ENCODE measurements at regions of chr2 and their contacts with region 1.

Region 1: DNA sequence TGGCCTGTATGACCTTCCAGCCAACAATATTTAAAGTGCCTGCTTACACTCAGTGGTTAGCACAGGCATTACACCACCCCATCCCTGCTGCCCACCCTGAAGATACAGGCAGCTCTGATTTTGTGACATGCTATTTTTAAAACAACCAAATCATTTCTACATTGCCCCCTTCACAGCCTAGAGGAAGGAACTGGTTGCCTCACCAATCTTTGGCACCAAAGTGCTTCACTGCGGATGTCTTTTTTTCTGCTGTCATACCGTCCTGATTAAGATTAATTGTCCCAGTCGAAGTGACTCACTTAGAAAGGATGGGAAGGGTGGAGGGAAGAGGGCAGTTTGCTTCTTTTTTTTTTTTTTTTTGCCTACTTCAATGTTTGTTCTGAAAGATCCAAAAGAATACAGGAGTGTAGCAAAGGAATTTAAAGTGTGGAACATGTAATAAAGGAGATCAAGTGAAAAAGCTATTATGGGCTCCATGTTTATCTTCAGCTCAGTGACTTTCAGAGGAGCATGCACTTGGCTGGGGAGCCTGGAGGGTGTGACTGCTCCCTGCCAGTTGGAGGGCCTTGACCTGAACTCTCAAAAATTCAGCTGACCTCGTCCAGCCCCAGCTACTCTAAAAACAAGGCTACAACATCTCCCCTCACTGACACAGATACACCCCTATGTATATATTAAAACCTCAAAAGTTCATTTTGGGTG is 501.1 kb upstream of the TNP1 start:
- DNase-seq: peak; percentile 65
- H3K4me3 ChIP-seq: no peak overlapping the region
- H3K27ac ChIP-seq: peak overlapping the region; percentile 41
- H3K27me3 ChIP-seq: no peaks in the 10 kb centered on the region
- CTCF ChIP-seq: no peak

Region 2: DNA sequence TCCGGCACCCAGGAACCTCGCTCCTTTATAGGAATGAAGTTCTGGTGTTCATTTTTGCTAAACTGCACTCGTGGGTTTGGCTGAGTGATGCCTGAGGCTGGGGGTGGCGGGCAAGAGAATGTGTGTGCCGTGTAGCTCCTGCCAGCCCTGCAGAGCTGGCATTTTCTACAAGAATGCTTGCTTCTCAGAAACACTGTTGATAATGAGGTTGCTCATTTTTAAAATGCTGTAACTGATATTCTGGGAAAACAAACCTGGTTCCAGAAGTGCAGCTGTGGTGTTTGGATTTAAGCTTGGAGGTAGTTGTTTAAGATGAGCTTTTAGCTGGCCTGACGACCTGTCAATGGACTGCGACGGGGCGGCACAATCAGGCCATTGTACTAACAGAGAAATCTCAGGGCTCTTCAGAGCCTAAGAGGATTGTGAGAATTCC is 10.9 kb after region 1 on chr2:
- CTCF ChIA-PET with region 1: no interaction called
- POLR2A ChIA-PET with region 1: interaction called, 12 read pairs
- DNase-seq: no peak
- H3K4me3 ChIP-seq: no peak overlapping the region
- H3K27ac ChIP-seq: peak overlapping the region; percentile 35
- H3K27me3 ChIP-seq: no peaks in the 10 kb centered on the region
- CTCF ChIP-seq: no peak

Region 3: DNA sequence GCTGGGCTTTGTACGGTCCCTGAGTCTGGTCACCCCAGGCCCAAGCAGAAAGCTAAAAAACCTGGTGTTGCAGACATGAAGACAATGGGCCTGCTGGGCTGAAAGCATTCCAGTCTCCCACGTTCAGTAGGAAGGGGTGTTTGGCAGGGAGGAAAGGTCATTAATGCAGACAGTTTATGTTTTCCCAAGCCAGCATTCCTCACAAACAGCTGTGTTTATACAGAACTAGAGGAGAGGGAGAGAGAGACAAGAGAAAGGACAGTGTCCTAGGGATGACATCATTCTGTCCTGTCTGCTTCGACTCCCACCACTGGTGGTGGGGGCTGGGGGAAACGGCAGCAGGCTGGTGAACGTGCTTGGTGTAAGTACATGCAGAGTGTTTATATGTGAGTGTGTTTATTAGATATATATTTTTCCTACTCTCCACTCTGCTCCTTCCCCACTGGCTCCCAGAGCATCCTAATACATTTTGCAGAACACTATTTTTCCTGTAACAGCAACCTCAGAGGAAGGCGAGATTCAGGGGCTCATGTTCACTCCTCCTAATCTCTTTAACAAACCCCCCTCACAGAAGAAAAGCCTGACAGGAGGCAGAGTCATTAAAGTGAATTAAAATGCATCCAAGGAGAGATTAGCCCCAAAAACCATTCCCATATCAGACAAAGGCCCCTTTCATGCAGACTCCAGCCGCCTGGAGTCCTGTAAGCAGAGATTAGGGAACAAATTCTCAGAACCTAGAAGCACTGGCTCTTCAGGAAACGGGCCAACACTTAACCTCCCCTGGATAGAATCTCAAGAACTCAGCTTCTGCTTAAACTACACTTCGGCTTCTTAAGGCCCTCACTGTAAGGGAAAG is 261.5 kb after region 1 on chr2:
- CTCF ChIA-PET with region 1: no interaction called
- POLR2A ChIA-PET with region 1: no interaction called
- DNase-seq: peak; percentile 92
- H3K4me3 ChIP-seq: no peak overlapping the region
- H3K27ac ChIP-seq: peak overlapping the region; percentile 69
- H3K27me3 ChIP-seq: peaks cover 8% of the 10 kb centered on the region
- CTCF ChIP-seq: no peak